Psoas muscle (tissue), 8 donors: ENCODE measurements at regions of chr4 and their contacts with region 1.

Region 1: GRCh38 chr4:81756973-81757372 is 285.3 kb upstream of the RASGEF1B start:
- DNase-seq: no peak
- ATAC-seq: no peak
- H3K4me3 ChIP-seq: no peak overlapping the region
- H3K27ac ChIP-seq: no peak overlapping the region
- H3K4me1 ChIP-seq: no peaks in the 10 kb centered on the region
- H3K27me3 ChIP-seq: no peaks in the 10 kb centered on the region
- CTCF ChIP-seq: no peak

Region 2: GRCh38 chr4:81418572-81418971 is 338.4 kb before region 1 on chr4:
- intact Hi-C with region 1: loop called in 1 of 2 experiments (anchors 1 kb)
- DNase-seq: no peak
- ATAC-seq: no peak
- H3K4me3 ChIP-seq: no peak overlapping the region
- H3K27ac ChIP-seq: no peak overlapping the region
- H3K4me1 ChIP-seq: no peaks in the 10 kb centered on the region
- H3K27me3 ChIP-seq: no peaks in the 10 kb centered on the region
- CTCF ChIP-seq: no peak